Activated naive CD4-positive, alpha-beta T cell treated with anti-CD3 and anti-CD28 coated beads, Interleukin-2, amount 10 ng/mL, durations not matched to agents 7 days and 5 days (primary cell): ENCODE measurements at regions of chr15 and their contacts with region 1.

Region 1: DNA sequence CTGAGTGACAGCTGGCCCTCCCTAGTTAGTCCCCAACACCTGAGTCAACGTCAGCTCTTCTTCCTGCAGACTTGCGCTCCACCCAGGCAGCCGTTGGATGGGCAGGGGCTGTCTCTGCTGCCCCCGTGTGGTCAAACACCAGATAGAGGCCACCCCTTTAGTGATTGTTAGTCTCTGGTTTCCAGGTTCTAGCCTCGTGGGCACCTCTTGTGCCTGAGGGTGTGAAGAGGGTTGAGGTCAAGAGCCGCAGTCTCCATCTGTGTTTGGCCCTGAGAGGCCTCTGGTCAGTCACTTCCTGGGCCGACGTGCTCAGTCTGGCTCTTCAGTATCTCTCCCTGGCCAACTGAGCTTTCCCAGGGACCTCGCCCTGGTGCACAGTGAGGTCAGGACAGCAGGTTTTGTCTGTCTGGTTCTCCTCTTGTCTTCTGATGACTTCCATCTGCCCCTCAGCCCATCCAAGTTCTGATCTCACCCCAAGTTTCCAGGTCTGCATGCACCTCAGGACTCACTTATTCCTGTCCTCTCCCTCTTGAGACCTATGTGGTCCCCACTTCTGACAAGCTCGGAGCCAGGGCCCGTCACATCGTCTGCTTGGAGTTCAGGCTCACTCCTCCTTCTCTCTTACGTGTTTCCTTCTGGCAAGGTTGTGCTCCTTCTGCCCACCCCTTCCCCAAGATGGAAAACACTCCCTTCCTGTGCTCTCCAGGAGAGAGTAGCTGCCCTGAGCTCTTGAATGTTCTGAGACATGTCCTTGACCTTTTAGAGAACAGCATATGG is 20.9 kb downstream of the CD276 start:
- DNase-seq: peak; percentile 80
- H3K4me3 Mint-ChIP-seq: no peak overlapping the region
- H3K27ac Mint-ChIP-seq: no peak overlapping the region
- H3K4me1 Mint-ChIP-seq: peaks cover 4% of the 10 kb centered on the region
- H3K27me3 Mint-ChIP-seq: peaks cover 38% of the 10 kb centered on the region

Region 2: GRCh38 chr15:73069109-73069508 is 635.9 kb before region 1 on chr15:
- CTCF ChIA-PET with region 1: no interaction called
- DNase-seq: no peak
- H3K4me3 Mint-ChIP-seq: no peak overlapping the region
- H3K27ac Mint-ChIP-seq: no peak overlapping the region
- H3K4me1 Mint-ChIP-seq: no peaks in the 10 kb centered on the region
- H3K27me3 Mint-ChIP-seq: no peaks in the 10 kb centered on the region

Region 3: DNA sequence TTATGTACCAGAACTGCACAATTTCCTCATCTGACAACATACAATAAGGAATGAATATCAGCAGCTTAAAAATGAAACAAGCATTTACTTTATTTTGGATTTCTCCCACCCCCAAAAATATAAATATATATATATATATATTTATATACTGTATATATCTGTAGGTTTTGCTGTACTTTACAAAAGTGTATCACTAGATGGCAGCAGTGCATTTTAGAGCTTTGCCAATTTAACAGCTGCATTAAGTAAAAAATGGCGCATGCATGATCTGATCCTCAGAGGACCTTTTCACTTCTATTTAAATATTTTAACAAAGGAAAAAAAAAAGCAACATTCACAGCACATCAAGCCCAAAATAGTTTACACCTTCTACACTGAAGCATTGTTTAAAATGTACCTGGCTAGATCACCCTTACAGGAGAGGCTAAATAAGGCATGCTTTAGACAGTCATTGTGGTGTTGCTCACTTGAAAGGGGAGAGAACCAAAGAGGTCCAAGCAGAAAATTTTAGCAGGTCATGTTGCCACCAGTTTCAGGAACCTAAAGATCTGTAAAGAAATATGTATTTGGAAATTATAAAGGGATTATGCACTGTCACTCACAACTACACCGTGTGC is 144.4 kb before region 1 on chr15:
- CTCF ChIA-PET with region 1: interaction called, 40 read pairs
- DNase-seq: no peak
- H3K4me3 Mint-ChIP-seq: no peak overlapping the region
- H3K27ac Mint-ChIP-seq: no peak overlapping the region
- H3K4me1 Mint-ChIP-seq: peaks cover 6% of the 10 kb centered on the region
- H3K27me3 Mint-ChIP-seq: no peaks in the 10 kb centered on the region

Region 4: DNA sequence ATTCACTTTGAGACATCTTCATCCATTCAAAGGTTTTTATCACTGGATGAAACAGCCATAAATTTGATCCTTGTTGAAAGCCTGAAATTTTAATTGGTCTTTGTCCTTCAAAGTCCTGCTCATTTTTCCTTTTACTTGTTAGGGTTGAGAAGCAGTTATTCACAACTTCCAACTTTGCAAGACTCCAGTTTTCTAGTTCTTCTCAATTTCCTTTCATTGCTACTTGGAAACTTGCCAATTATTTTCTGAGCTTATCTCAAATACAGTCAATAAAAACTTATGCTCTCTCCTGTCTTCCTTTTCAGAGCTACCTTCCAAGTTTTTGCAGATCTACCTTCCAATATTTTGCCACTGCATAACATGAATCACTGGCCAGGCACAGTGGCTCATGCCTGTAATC is 44.6 kb before region 1 on chr15:
- CTCF ChIA-PET with region 1: no interaction called
- DNase-seq: no peak
- H3K4me3 Mint-ChIP-seq: no peak overlapping the region
- H3K27ac Mint-ChIP-seq: no peak overlapping the region
- H3K4me1 Mint-ChIP-seq: peaks cover 3% of the 10 kb centered on the region
- H3K27me3 Mint-ChIP-seq: peaks cover 24% of the 10 kb centered on the region

Region 5: DNA sequence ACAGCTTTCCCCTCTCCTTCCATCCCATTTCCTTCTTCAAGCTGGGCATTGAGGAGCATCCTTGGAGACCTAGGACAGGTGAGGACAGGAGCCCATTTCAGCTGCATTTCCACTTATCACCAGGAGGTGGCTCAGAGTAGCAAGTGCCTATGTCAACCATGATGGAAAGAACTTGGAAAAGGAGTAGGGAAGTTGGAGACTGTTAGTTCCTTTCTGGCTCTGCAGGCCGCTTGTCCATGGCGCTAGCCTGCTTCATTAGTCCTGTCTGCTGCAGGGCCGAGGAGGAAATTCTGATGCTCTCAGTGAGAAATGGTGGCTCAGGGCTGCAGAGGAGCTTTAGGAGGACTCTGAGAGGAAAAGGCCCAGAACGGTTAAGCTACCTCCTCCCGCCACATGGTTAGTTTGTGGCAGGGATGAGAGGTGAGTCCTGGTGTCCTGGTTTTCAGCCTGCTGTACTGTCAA is 27.9 kb before region 1 on chr15:
- CTCF ChIA-PET with region 1: interaction called, 50 read pairs
- DNase-seq: peak; percentile 68
- H3K4me3 Mint-ChIP-seq: no peak overlapping the region
- H3K27ac Mint-ChIP-seq: no peak overlapping the region
- H3K4me1 Mint-ChIP-seq: peaks cover 2% of the 10 kb centered on the region
- H3K27me3 Mint-ChIP-seq: peaks cover 39% of the 10 kb centered on the region

Region 6: DNA sequence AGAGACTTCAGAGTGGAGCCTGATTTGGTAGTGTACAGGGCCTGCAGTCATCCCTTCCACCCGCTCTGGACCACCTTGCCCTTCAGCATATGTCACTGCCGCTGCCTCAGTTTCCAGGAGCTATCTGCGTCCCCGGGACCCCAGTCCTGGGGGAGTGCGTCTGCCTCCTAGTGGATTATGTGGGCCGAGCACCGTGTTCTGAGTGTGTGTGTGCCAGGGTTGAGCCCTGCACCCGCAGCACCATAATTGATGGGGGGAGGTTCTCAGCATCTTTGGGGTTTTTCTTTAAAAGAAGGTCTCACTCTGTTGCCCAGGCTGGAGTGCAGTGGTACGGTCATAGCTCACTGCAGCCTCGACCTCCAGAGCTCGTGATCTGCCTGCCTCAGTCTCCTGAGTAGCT is 12.7 kb after region 1 on chr15:
- CTCF ChIA-PET with region 1: interaction called, 20 read pairs
- DNase-seq: no peak
- H3K4me3 Mint-ChIP-seq: no peak overlapping the region
- H3K27ac Mint-ChIP-seq: no peak overlapping the region
- H3K4me1 Mint-ChIP-seq: no peaks in the 10 kb centered on the region
- H3K27me3 Mint-ChIP-seq: peaks cover 46% of the 10 kb centered on the region